ENCODE measurements at regions of chr14 and their contacts with region 1.

Region 1: DNA sequence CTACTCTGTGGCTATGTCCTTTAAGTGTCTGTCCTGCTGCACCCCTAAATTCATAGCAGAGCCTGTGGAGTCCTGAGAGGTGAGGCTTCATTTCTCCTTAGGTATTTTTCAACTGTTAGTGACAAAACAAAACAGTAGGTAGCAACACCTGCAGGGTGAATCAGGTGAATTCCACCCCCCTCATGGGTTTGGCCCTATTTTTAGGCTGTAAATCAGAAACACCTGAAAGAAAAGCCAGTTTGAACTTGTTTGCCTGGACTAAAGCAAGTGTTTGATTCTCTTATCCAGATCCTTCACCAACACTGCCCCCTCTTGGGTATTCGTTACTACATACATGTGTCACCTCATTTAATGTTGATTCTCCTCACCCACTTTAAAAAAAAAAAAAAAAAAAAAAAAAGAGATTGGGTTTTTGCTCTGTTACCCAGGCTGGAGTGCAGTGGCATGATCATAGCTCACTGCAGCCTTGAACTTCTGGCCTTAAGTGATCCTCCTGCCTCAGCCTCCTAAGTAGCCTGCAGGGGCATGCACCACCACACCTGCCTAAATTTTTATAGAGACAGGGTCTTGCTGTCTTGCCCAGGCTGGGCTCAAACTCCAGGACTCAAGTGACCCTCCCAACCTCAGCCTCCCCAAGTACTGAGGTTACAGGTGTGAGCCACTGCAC is 10.3 kb downstream of the TBPL2 start:
- DNase-seq: peak; percentile 23 to 72 (median 44)
- ATAC-seq: peak; percentile 91; the same call in 2 of the 3 replicates
- H3K4me3 ChIP-seq: no peak overlapping the region
- H3K27ac ChIP-seq: no peak overlapping the region
- H3K4me1 ChIP-seq: peaks cover 0 to 4% of the 10 kb centered on the region in 2 experiments; a peak in 1 of 5 replicates
- H3K27me3 ChIP-seq: no peaks in the 10 kb centered on the region
- CTCF ChIP-seq: peak; percentile 28 to 65 (median 40); a peak in 3 of 6 replicates
- EP300 ChIP-seq: no peak
- POLR2A ChIP-seq: no peak
- RAD21 ChIP-seq: peak; percentile 46 to 65; a peak in 3 of 4 replicates

Region 2: DNA sequence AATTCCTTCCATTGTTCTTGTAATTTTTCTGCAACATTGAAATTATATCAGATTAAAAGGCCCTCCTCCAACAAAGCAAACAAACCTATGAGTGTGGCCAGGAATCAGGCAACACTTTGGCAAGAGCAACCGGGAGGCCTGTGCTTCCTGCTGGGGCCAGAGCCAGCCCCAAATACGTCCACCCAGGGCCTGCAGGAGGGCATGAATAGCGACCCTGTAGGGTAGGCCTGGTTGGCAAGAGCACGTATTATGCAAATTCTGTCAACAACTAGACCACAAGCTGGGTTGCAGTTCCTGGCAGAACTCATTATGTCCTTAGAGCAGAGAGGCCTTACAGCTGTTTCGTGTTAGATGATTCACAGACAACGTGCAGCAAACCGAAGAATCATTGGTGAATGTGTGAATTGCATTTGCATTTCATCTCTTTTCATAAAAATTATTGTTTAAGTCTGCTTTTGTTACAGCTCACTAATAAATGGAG is 328.0 kb before region 1 on chr14:
- CTCF ChIA-PET with region 1: no interaction called
- POLR2A ChIA-PET with region 1: no interaction called
- in situ Hi-C with region 1: no loop called
- intact Hi-C with region 1: loop called (anchors 5 kb)
- DNase-seq: peak in 1 of 4 experiments; percentile 46
- ATAC-seq: peak; percentile 30
- H3K4me3 ChIP-seq: no peak overlapping the region; the same call in 1 of the 2 replicates
- H3K27ac ChIP-seq: peak overlapping the region; percentile 99
- H3K4me1 ChIP-seq: peaks cover 4 to 32% of the 10 kb centered on the region in 2 experiments; a peak in 4 of 5 replicates
- H3K27me3 ChIP-seq: no peaks in the 10 kb centered on the region
- CTCF ChIP-seq: no peak
- EP300 ChIP-seq: no peak
- POLR2A ChIP-seq: no peak
- RAD21 ChIP-seq: no peak

Region 3: DNA sequence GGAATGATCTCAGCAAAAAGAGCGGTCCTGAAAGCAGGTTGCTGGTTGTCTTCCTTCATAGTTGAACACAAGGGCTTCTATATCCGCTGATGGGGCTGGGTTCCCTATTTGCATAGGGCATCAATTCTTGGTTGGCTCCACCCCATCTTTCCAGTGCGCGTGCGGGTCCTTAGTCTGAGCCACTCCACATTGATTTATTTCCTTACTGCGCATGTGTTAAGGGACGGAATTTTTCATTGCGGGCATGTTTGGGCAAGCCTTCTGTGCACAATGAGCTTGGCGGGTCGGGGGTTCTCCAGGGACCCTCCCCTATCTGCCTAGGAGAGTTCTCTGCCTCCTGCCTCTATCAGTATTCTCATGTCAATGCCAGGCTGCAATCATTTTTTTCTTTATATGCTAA is 217.5 kb before region 1 on chr14:
- CTCF ChIA-PET with region 1: interaction called, 3 read pairs
- POLR2A ChIA-PET with region 1: no interaction called
- in situ Hi-C with region 1: no loop called
- intact Hi-C with region 1: loop called (anchors 1 kb)
- DNase-seq: no peak
- ATAC-seq: no peak
- H3K4me3 ChIP-seq: no peak overlapping the region
- H3K27ac ChIP-seq: no peak overlapping the region
- H3K4me1 ChIP-seq: no peaks in the 10 kb centered on the region
- H3K27me3 ChIP-seq: no peaks in the 10 kb centered on the region
- CTCF ChIP-seq: no peak
- EP300 ChIP-seq: no peak
- POLR2A ChIP-seq: no peak
- RAD21 ChIP-seq: no peak

Region 4: GRCh38 chr14:55373784-55374705 is 56.1 kb before region 1 on chr14:
- CTCF ChIA-PET with region 1: no interaction called
- POLR2A ChIA-PET with region 1: no interaction called
- in situ Hi-C with region 1: no loop called
- intact Hi-C with region 1: loop called (anchors 10 kb)
- DNase-seq: no peak
- ATAC-seq: no peak
- H3K4me3 ChIP-seq: no peak overlapping the region
- H3K27ac ChIP-seq: no peak overlapping the region
- H3K4me1 ChIP-seq: peaks cover 18 to 25% of the 10 kb centered on the region in 2 experiments; a peak in 4 of 5 replicates
- H3K27me3 ChIP-seq: no peaks in the 10 kb centered on the region
- CTCF ChIP-seq: no peak
- EP300 ChIP-seq: no peak
- POLR2A ChIP-seq: no peak
- RAD21 ChIP-seq: no peak